Panc1 (cell line): ENCODE measurements at regions of chr6 and their contacts with region 1.

Region 1: DNA sequence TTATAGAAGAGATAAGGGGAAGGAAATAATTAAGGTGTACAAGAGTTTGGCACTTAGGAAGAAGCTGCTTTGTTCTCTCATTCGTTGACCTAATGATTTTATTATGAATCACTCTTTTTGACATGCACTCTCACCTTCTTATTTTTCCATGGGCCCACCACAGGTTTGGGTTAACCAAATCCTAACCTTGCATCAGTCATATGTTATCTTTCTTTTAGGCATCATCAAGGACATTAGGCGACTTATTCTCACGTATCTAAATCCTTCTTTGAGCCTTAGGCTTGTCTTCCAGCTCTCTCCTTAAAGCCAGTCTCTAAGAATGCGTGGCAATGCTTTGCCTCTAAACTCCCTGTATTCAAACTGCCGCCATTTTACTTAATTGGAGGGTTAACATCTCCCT is 58.3 kb downstream of the TNFRSF21 start:
- DNase-seq: no peak
- ATAC-seq: no peak
- H3K4me3 ChIP-seq: no peak overlapping the region
- H3K27ac ChIP-seq: no peak overlapping the region
- H3K4me1 ChIP-seq: peaks cover 15% of the 10 kb centered on the region
- H3K27me3 ChIP-seq: no peaks in the 10 kb centered on the region
- CTCF ChIP-seq: no peak

Region 2: DNA sequence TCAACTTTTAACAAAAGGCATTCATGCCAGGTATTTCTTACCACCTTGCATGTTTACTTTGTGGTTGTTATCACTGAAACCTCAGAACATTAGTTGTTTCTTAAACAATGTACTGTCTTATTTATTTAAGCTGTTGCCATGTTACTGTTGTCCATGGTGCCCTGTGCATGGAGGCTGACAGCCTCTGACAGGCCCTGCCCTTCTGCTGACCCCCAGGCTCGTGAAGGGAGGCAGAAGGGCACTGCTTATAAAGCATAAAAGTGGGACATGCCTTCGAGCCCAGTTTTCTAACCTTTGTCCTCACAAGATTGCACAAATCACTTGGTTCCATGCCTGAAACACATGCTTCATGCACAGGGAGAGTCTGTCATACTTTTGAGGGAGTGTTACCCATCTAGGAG is 1189.1 kb before region 1 on chr6:
- CTCF ChIA-PET with region 1: no interaction called
- POLR2A ChIA-PET with region 1: no interaction called
- in situ Hi-C with region 1: no loop called
- intact Hi-C with region 1: no loop called
- DNase-seq: no peak
- ATAC-seq: no peak
- H3K4me3 ChIP-seq: no peak overlapping the region
- H3K27ac ChIP-seq: no peak overlapping the region
- H3K4me1 ChIP-seq: no peaks in the 10 kb centered on the region
- H3K27me3 ChIP-seq: 0 out of 2 replicates have a peak, but pooled peaks cover 5% of the 10 kb centered on the region
- CTCF ChIP-seq: no peak

Region 3: GRCh38 chr6:46501136-46502089 is 750.0 kb before region 1 on chr6:
- CTCF ChIA-PET with region 1: interaction called, 14 read pairs
- POLR2A ChIA-PET with region 1: no interaction called
- in situ Hi-C with region 1: no loop called
- intact Hi-C with region 1: no loop called
- DNase-seq: no peak
- ATAC-seq: no peak
- H3K4me3 ChIP-seq: no peak overlapping the region
- H3K27ac ChIP-seq: no peak overlapping the region
- H3K4me1 ChIP-seq: no peaks in the 10 kb centered on the region
- H3K27me3 ChIP-seq: no peaks in the 10 kb centered on the region; the same call in 1 of the 2 replicates
- CTCF ChIP-seq: no peak